ENCODE measurements at regions of chr2 and their contacts with region 1.

Region 1: GRCh38 chr2:230202430-230203109 is 17.2 kb downstream of the SP110 start:
- DNase-seq: peak; percentile 79
- ATAC-seq: peak; percentile 61
- H3K4me3 ChIP-seq: no peak overlapping the region
- H3K4me3 Mint-ChIP-seq: peak overlapping the region; percentile 74
- H3K27ac ChIP-seq: peak overlapping the region; percentile 9 to 72
- H3K27ac Mint-ChIP-seq: peak overlapping the region; percentile 87
- H3K4me1 ChIP-seq: peaks cover 51 to 55% of the 10 kb centered on the region in 2 donors
- H3K4me1 Mint-ChIP-seq: peaks cover 39% of the 10 kb centered on the region
- H3K27me3 ChIP-seq: no peaks in the 10 kb centered on the region
- H3K27me3 Mint-ChIP-seq: no peaks in the 10 kb centered on the region
- CTCF ChIP-seq: peak; percentile 64

Region 2: GRCh38 chr2:230219419-230220331 is 17.1 kb after region 1 on chr2 and contains the start of gene SP110:
- CTCF ChIA-PET with region 1: interaction called, 44 read pairs
- POLR2A ChIA-PET with region 1: interaction called, 10 read pairs
- intact Hi-C with region 1: loop called (anchors 2 kb)
- DNase-seq: peak; percentile 87
- ATAC-seq: peak; percentile 76
- H3K4me3 ChIP-seq: peak within 1 kb of the TSS; percentile 66 to 100 (median 89)
- H3K4me3 Mint-ChIP-seq: peak within 1 kb of the TSS; percentile 99
- H3K27ac ChIP-seq: peak within 1 kb of the TSS; percentile 71 to 80
- H3K27ac Mint-ChIP-seq: peak within 1 kb of the TSS; percentile 96
- H3K4me1 ChIP-seq: peaks cover 72 to 83% of the 10 kb centered on the region in 2 donors
- H3K4me1 Mint-ChIP-seq: peaks cover 78% of the 10 kb centered on the region
- H3K27me3 ChIP-seq: no peaks in the 10 kb centered on the region
- H3K27me3 Mint-ChIP-seq: no peaks in the 10 kb centered on the region
- CTCF ChIP-seq: no peak
- total RNA-seq, gene SP110: 261 and 280 TPM in 2 replicates

Region 3: GRCh38 chr2:230234845-230235244 is 32.3 kb after region 1 on chr2:
- CTCF ChIA-PET with region 1: interaction called, 6 read pairs
- POLR2A ChIA-PET with region 1: no interaction called
- intact Hi-C with region 1: loop called (anchors 2 kb)
- DNase-seq: no peak
- ATAC-seq: no peak
- H3K4me3 ChIP-seq: no peak overlapping the region
- H3K4me3 Mint-ChIP-seq: peak overlapping the region; percentile 30
- H3K27ac ChIP-seq: peak overlapping the region in 1 of 2 donors; percentile 35
- H3K27ac Mint-ChIP-seq: peak overlapping the region; percentile 85
- H3K4me1 ChIP-seq: peaks cover 35 to 45% of the 10 kb centered on the region in 2 donors
- H3K4me1 Mint-ChIP-seq: peaks cover 63% of the 10 kb centered on the region
- H3K27me3 ChIP-seq: no peaks in the 10 kb centered on the region
- H3K27me3 Mint-ChIP-seq: no peaks in the 10 kb centered on the region
- CTCF ChIP-seq: no peak

Region 4: GRCh38 chr2:230256733-230257332 is 54.3 kb after region 1 on chr2:
- CTCF ChIA-PET with region 1: interaction called, 7 read pairs
- POLR2A ChIA-PET with region 1: interaction called, 5 read pairs
- intact Hi-C with region 1: loop called (anchors 2 kb)
- DNase-seq: no peak
- ATAC-seq: no peak
- H3K4me3 ChIP-seq: no peak overlapping the region
- H3K4me3 Mint-ChIP-seq: peak overlapping the region; percentile 68
- H3K27ac ChIP-seq: peak overlapping the region; percentile 43 to 78
- H3K27ac Mint-ChIP-seq: peak overlapping the region; percentile 83
- H3K4me1 ChIP-seq: peaks cover 20 to 26% of the 10 kb centered on the region in 2 donors
- H3K4me1 Mint-ChIP-seq: peaks cover 45% of the 10 kb centered on the region
- H3K27me3 ChIP-seq: no peaks in the 10 kb centered on the region
- H3K27me3 Mint-ChIP-seq: no peaks in the 10 kb centered on the region
- CTCF ChIP-seq: no peak

Region 5: DNA sequence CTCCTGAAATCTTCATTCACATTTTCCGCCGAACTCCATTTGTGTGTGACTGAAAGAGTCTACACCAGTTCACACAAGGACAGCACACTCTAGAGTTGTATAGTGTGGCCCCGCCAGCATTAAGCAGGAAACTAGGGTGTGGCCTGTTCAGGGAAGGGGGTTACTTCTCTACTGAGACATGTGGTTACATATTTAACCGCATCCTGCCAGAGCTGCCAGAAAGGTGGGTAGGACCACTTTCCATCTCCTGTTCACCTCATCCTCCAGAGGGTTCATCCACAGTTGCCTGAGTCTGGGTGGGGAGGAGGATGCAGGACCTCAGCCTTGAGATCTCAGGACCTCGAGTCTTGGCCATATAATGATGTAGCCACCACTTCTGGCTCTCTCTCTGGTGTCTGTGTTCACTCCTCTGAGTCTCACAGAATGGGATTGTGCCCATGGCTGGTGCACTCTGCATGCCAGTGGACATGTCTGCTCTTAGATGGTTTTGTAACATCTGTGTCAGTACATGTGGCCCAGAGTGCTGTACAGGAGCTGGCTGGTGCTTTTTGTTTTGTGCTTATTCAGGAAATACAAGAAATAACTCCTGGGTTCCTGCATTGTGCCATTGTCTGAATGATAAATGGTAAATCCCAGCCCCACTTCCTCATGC is 116.8 kb after region 1 on chr2:
- CTCF ChIA-PET with region 1: interaction called, 17 read pairs
- POLR2A ChIA-PET with region 1: no interaction called
- intact Hi-C with region 1: no loop called
- DNase-seq: peak; percentile 78
- ATAC-seq: peak; percentile 84
- H3K4me3 ChIP-seq: peak overlapping the region in 4 of 5 experiments; percentile 6 to 47 (median 21)
- H3K4me3 Mint-ChIP-seq: peak overlapping the region; percentile 69
- H3K27ac ChIP-seq: peak overlapping the region; percentile 79 to 86
- H3K27ac Mint-ChIP-seq: peak overlapping the region; percentile 92
- H3K4me1 ChIP-seq: peaks cover 41 to 63% of the 10 kb centered on the region in 2 donors
- H3K4me1 Mint-ChIP-seq: peaks cover 76% of the 10 kb centered on the region
- H3K27me3 ChIP-seq: no peaks in the 10 kb centered on the region
- H3K27me3 Mint-ChIP-seq: no peaks in the 10 kb centered on the region
- CTCF ChIP-seq: no peak

Region 6: DNA sequence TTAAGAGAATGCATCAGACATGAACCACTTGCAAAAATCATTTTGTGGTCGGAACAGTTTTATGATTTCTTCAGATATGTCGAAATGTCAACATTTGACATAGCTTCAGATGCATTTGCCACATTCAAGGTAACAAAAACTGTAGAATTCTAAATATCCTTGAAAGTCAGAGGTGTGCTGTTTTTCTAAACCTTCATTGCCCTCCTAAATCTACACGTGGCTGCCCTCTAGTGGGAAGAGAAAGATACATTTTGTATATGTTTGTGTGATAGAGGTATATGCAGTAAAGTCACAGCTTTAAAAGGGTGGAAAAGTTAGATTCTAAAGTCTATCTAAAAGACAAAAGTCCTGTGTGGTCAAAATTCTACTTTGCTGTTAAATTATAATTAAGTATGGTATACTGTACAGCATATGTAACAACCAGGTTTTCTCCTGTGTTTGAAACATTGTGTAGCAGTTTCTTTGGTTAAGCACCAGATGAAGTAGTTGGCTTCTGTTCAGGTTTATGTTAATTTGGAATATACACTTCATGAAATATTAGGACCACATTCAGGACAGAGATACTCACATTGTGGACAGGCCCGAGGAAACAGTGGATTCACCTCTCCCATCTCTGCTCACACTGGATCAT is 596.3 kb after region 1 on chr2:
- CTCF ChIA-PET with region 1: interaction called, 16 read pairs
- POLR2A ChIA-PET with region 1: interaction called, 5 read pairs
- intact Hi-C with region 1: no loop called
- DNase-seq: peak; percentile 61
- ATAC-seq: no peak
- H3K4me3 ChIP-seq: no peak overlapping the region
- H3K4me3 Mint-ChIP-seq: no peak overlapping the region
- H3K27ac ChIP-seq: no peak overlapping the region
- H3K27ac Mint-ChIP-seq: peak overlapping the region; percentile 44
- H3K4me1 ChIP-seq: peaks cover 26 to 29% of the 10 kb centered on the region in 2 donors
- H3K4me1 Mint-ChIP-seq: peaks cover 18% of the 10 kb centered on the region
- H3K27me3 ChIP-seq: no peaks in the 10 kb centered on the region
- H3K27me3 Mint-ChIP-seq: no peaks in the 10 kb centered on the region
- CTCF ChIP-seq: peak; percentile 80

Measured in B cell (primary cell).